HCT116 (cell line): ENCODE measurements at regions of chr1 and their contacts with region 1.

Region 1: GRCh38 chr1:113072757-113073478 is at the start of gene LRIG2:
- DNase-seq: peak; percentile 97
- ATAC-seq: peak; percentile 97
- H3K4me3 ChIP-seq: peak within 1 kb of the TSS; percentile 86 to 95
- H3K27ac ChIP-seq: peak within 1 kb of the TSS; percentile 86
- H3K4me1 ChIP-seq: peaks cover 9 to 14% of the 10 kb centered on the region in 2 experiments
- H3K27me3 ChIP-seq: no peaks in the 10 kb centered on the region
- CTCF ChIP-seq: peak; percentile 64 to 99 (median 93)
- POLR2A ChIP-seq: peak; percentile 94
- RAD21 ChIP-seq: peak; percentile 75
- total RNA-seq, gene LRIG2: 13.5 TPM

Region 2: DNA sequence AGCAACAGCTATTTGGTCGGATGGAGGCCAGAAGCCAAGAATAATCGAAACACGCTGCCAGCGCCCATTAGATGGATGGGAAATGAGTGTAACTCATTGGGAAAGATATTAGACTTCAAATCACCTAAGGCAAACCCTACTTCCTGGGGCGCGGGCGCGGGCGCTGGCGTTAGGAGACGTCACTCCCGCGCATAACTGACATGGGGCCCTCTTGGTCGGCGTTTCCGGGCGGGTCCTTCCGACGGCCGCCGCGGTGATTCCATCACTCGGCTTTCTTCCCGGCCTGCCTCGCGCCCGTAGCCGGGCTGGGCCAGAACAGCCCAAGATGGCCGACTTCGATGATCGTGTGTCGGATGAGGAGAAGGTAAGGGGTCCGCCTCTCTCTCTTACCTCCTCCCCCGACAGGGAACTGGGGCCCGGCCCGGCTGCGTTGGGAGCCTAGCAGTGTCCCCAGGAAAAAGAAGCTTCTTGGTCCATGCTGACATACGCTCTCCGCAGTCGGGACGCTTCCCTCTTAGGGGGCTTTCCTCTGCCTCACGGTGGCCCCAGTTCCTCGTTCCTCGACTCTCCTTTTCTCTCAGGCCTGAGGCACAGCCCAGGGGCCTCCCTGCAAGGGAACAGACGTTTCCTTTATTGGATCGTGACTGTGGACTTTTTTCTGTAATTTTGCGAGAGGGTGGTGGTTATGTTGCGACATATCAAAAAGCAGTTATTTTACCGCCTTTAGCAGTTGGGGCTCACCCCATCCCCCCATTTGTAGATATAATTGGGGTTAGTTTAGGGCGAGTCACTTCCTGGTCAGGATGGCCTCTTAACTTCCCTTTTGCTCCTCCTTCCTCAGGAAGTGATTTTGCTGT is 453.2 kb before region 1 on chr1 and contains the start of gene CAPZA1:
- CTCF ChIA-PET with region 1: no interaction called
- POLR2A ChIA-PET with region 1: no interaction called
- RAD21 ChIA-PET with region 1: no interaction called
- intact Hi-C with region 1: no loop called
- DNase-seq: peak; percentile 79
- ATAC-seq: peak; percentile 92
- H3K4me3 ChIP-seq: peak within 1 kb of the TSS; percentile 76 to 93
- H3K27ac ChIP-seq: peak within 1 kb of the TSS; percentile 87
- H3K4me1 ChIP-seq: peaks cover 9 to 24% of the 10 kb centered on the region in 2 experiments; a peak in 3 of 4 replicates
- H3K27me3 ChIP-seq: no peaks in the 10 kb centered on the region
- CTCF ChIP-seq: no peak
- POLR2A ChIP-seq: peak; percentile 89
- RAD21 ChIP-seq: no peak
- total RNA-seq, gene CAPZA1: 148 TPM

Region 3: DNA sequence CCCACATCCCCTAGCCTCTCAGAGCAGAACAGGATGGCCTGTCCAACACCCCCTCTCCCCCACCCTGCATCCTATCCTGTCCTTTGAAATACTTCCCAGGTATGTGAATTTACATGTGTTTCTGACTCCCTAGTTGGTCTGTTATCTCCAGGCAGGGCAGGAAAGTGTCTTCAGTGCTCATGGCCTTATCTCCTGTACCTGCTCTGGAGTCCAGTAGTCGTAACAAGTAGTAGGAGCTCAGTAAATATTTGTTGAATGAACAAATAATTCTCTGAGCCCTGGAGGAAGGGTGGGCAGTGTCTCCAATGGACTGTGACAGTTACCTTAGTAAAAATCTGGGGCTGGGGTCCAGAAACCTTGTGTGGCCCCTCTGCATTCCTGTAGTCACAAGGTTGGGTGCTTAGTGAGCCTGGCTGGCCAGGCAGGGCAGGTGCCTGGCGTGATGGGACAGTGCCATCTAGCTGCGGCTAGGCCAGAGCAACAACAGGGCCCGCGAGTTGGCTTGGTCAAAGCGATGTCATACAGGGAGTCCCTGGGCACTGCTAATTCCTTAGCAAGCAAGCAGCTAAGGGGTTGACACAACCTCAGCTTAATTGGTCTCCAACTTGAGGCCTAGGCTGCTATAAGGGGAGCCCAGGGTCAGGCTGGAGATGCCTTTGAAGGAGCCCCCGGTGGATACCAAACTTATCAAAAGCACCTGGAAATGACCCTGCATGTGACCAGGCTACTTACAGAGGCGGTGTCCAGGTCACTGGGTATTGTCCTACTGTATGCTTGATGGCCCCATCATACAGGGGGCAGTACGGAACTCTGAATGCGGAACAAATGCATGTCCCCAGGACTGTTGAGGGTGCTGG is 268.8 kb before region 1 on chr1:
- CTCF ChIA-PET with region 1: interaction called, 17 read pairs
- POLR2A ChIA-PET with region 1: no interaction called
- RAD21 ChIA-PET with region 1: no interaction called
- intact Hi-C with region 1: loop called (anchors 10 kb)
- DNase-seq: peak; percentile 61
- ATAC-seq: peak; percentile 97
- H3K4me3 ChIP-seq: no peak overlapping the region
- H3K27ac ChIP-seq: no peak overlapping the region
- H3K4me1 ChIP-seq: no peaks in the 10 kb centered on the region
- H3K27me3 ChIP-seq: no peaks in the 10 kb centered on the region
- CTCF ChIP-seq: peak; percentile 93 to 96 (median 93)
- POLR2A ChIP-seq: no peak
- RAD21 ChIP-seq: peak; percentile 100

Region 4: DNA sequence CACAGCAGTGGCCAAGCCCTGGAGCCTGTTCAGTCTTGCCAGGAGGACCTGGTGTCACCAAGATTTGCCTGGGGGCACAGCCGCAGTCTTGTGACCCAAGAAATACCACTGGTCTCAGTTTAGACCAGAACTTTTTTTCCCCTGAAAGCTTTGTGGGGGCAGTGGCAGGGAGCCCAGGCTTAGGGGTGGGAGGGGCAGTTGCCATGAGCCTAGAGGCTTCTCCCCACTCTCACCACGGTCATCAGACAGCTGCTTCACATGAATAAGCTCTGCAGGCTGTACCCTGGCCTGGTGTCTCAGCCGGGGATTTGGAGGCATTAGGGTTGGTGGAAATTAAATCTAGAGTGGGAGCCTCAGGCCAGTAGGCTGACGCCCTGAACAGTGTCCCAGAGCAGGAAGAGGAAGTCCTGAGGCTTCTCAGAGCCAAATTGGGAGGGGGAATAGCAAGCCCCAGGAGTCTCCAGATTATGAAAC is 190.6 kb before region 1 on chr1:
- CTCF ChIA-PET with region 1: interaction called, 28 read pairs
- POLR2A ChIA-PET with region 1: interaction called, 3 read pairs
- RAD21 ChIA-PET with region 1: no interaction called
- intact Hi-C with region 1: no loop called
- DNase-seq: no peak
- ATAC-seq: no peak
- H3K4me3 ChIP-seq: no peak overlapping the region
- H3K27ac ChIP-seq: no peak overlapping the region
- H3K4me1 ChIP-seq: no peaks in the 10 kb centered on the region
- H3K27me3 ChIP-seq: no peaks in the 10 kb centered on the region
- CTCF ChIP-seq: no peak
- POLR2A ChIP-seq: no peak
- RAD21 ChIP-seq: no peak

Region 5: GRCh38 chr1:113057006-113057405 is 15.9 kb before region 1 on chr1:
- CTCF ChIA-PET with region 1: interaction called, 47 read pairs
- POLR2A ChIA-PET with region 1: no interaction called
- RAD21 ChIA-PET with region 1: no interaction called
- intact Hi-C with region 1: no loop called
- DNase-seq: no peak
- ATAC-seq: no peak
- H3K4me3 ChIP-seq: no peak overlapping the region
- H3K27ac ChIP-seq: no peak overlapping the region
- H3K4me1 ChIP-seq: no peaks in the 10 kb centered on the region
- H3K27me3 ChIP-seq: no peaks in the 10 kb centered on the region
- CTCF ChIP-seq: no peak
- POLR2A ChIP-seq: no peak
- RAD21 ChIP-seq: no peak

Region 6: DNA sequence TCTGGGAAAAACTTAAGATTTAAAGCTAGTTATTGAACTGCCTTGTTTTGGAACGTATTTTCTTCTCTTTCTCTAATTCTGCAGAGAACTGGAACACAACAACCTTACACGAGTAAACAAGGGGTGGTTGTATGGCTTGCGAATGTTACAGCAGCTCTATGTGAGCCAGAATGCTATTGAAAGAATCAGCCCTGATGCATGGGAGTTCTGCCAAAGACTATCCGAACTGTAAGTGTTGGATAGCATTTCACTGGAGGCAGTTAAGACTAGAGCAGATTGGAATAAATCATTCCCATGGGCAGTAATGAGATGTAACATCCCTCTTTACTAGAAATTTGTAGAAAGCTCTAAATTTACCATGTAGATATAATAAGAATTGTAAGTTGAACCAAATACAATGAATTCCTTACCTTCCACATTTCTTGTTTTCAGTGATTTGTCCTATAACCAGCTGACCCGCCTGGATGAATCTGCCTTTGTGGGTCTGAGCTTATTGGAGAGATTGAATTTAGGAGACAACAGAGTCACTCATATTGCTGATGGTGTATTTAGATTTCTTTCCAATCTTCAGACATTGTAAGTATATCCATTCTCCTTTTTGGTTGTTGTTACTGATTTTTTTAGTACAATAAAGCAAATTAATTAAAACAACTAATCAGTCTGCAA is 23.0 kb after region 1 on chr1:
- CTCF ChIA-PET with region 1: interaction called, 11 read pairs
- POLR2A ChIA-PET with region 1: no interaction called
- RAD21 ChIA-PET with region 1: no interaction called
- intact Hi-C with region 1: no loop called
- DNase-seq: no peak
- ATAC-seq: no peak
- H3K4me3 ChIP-seq: no peak overlapping the region
- H3K27ac ChIP-seq: no peak overlapping the region
- H3K4me1 ChIP-seq: no peaks in the 10 kb centered on the region
- H3K27me3 ChIP-seq: no peaks in the 10 kb centered on the region
- CTCF ChIP-seq: no peak
- POLR2A ChIP-seq: no peak
- RAD21 ChIP-seq: no peak